Dorsolateral prefrontal cortex (tissue), 120 donors: ENCODE measurements at regions of chr15 and their contacts with region 1.

Region 1: DNA sequence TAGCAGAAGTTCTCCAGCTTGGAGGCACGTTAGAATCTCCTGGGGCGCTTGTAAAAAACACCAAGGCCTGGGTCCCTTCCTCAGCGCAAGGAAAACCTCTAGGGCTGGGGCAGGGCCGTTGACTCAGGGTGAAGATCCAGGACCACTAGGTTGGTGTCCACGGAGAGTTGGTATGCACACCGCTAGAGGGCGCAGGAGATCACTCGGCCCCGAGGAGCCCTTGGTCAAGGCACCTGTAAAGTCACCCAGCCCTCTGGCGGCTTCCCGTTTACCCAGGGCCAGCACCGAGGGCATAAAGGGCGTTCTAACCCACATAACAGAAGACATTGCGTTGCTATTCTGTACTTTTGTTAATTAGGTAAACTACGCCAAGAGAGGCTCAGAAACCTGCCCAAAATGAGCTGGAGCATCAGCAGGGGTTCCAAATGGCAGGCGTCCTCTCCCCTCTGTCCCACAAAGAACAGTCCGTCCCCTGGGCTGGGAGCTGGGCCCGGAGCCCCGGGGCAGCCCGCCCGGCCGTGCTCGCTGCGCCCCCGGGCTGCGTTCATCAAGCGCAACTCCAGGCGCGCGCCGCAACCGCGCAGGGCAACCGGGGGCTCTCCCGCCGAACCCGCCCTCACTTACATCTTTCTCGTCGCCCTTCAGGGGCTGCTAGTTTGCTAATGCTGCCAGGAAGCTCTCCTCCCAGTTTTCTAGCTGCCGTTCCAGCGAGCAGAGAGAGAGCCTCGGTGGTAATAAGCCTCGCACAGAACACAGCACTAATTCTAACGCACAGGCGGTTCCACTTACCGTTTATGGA is 332.1 kb downstream of the ARRDC4 start:
- DNase-seq: peak in 7 of 10 donors; percentile 22 to 59 (median 39)
- H3K4me3 ChIP-seq: peak overlapping the region in 55 of 59 donors; percentile 7 to 60 (median 38)
- H3K27ac ChIP-seq: no peak overlapping the region
- H3K27me3 ChIP-seq: peaks cover 0 to 72% (median 38%) of the 10 kb centered on the region in 45 donors
- CTCF ChIP-seq: peak; percentile 38 to 71 (median 58)

Region 2: GRCh38 chr15:96356494-96357455 is 1935.9 kb before region 1 on chr15:
- intact Hi-C with region 1: loop called in 1 of 2 experiments (anchors 10 kb)
- DNase-seq: peak in 8 of 10 donors; percentile 56 to 80 (median 64)
- H3K4me3 ChIP-seq: peak overlapping the region; percentile 39 to 76 (median 64)
- H3K27ac ChIP-seq: peak overlapping the region in 35 of 59 donors; percentile 2 to 91 (median 59)
- H3K27me3 ChIP-seq: peaks cover 10 to 99% (median 96%) of the 10 kb centered on the region in 45 donors
- CTCF ChIP-seq: peak; percentile 68 to 100 (median 96)

Region 3: GRCh38 chr15:97903971-97904572 is 388.6 kb before region 1 on chr15:
- intact Hi-C with region 1: loop called (anchors 5 to 10 kb)
- DNase-seq: peak; percentile 23 to 79 (median 64)
- H3K4me3 ChIP-seq: peak overlapping the region in 19 of 59 donors; percentile 2 to 41 (median 25)
- H3K27ac ChIP-seq: peak overlapping the region in 2 of 59 donors; percentile 1 to 36
- H3K27me3 ChIP-seq: peaks cover 0 to 78% (median 8%) of the 10 kb centered on the region in 45 donors
- CTCF ChIP-seq: peak; percentile 16 to 84 (median 66)

Region 4: DNA sequence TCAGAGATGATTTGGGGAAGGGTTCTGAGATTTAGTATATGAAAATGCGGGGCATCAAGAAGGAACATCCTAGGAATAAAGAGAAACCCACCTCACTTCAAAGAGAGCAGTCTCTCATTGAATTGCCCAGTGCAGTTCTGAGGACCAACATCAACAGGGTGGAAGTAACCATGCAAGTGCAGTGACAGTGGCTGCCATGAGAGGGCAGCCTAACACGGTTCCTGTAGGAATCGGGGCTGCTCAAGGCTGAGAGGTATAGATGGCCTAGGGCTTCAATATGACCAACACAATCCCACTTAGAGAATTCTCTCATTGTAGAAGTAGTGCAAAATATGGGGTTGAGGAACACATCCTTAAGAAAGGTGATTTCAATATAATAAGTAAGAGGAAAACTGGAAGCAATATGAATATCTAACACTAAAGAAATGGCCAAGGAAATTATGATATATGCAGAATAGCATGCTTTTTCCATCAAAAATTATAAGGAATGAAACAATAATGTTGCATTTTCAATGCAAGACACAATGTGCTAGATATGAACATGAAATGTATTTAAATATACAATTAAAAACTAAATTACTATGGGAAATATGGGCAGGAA is 383.2 kb before region 1 on chr15:
- intact Hi-C with region 1: loop called (anchors 5 to 10 kb)
- DNase-seq: peak in 9 of 10 donors; percentile 24 to 78 (median 65)
- H3K4me3 ChIP-seq: no peak overlapping the region
- H3K27ac ChIP-seq: no peak overlapping the region
- H3K27me3 ChIP-seq: peaks cover 0 to 69% (median 7%) of the 10 kb centered on the region in 45 donors
- CTCF ChIP-seq: peak; percentile 57 to 95 (median 85)

Region 5: DNA sequence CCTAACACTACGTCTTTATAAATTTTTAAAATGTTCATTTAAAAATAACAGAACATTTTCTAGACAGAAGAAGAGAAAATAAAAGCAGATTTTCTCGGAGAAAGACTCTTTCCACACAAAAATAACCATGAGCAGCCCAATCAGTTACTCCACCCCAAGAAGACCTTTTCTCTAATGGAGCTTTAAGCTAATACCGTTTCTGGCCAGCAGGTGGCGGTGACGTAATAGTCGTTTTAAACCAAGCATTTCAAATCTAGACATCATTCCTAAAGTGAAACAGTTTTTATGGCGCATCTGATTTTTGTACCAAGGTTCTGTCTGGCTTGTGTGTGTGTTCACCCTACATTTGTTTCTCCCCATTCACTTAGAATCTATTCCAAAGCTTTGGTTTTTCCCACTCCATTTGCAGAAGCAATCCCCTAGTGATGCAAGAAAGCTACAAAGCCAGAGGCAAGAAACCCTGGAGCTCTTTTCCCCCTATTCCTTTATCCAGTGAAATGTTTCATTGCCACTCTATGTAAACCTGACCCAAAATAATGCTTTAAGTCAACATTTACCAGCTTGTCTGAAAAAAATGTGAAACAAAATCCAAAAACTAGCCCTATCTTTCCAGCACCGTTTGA is 19.0 kb after region 1 on chr15:
- intact Hi-C with region 1: loop called in 1 of 2 experiments (anchors 1 kb)
- DNase-seq: peak; percentile 30 to 85 (median 58)
- H3K4me3 ChIP-seq: peak overlapping the region in 1 of 59 donors; percentile 12
- H3K27ac ChIP-seq: no peak overlapping the region
- H3K27me3 ChIP-seq: peaks cover 0 to 16% (median 0%) of the 10 kb centered on the region in 45 donors
- CTCF ChIP-seq: peak; percentile 69 to 94 (median 83)